H1 (cell line): ENCODE measurements at regions of chr3 and their contacts with region 1.

Region 1: DNA sequence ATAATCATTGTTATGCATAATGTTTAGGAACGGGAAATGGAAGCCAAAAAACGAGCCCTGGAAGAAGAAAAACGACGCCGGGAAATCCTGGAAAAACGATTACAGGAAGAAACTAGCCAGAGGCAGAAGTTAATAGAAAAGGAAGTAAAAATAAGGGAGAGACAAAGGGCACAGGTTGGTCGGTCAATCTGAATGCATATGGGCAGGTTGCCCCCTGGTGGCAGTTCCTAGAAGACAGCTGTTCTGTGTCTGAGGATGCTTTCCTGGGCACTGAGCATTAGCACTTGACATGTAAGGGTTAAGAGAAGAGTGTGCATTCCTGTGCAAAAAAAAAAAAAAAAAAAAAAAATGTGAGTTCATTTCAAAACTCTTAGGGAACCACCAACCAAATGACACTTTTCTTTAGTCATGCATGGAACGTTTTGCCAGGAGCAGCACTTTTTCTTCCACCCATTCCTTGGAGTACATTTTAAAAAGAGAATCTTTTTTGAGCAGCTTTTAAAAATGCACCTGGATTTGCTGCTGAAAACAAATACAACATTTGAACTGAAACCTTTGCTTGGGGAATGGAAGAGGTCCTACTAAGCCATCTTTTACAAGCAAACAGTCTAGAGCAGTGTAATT is 11.1 kb upstream of the ABHD10 start:
- DNase-seq: peak; percentile 58 to 93
- H3K4me3 ChIP-seq: no peak overlapping the region
- H3K27ac ChIP-seq: no peak overlapping the region
- H3K4me1 ChIP-seq: no peaks in the 10 kb centered on the region
- H3K27me3 ChIP-seq: no peaks in the 10 kb centered on the region
- CTCF ChIP-seq: peak; percentile 70 to 91 (median 88)
- EP300 ChIP-seq: no peak
- POLR2A ChIP-seq: no peak
- RAD21 ChIP-seq: peak; percentile 95 to 98

Region 2: DNA sequence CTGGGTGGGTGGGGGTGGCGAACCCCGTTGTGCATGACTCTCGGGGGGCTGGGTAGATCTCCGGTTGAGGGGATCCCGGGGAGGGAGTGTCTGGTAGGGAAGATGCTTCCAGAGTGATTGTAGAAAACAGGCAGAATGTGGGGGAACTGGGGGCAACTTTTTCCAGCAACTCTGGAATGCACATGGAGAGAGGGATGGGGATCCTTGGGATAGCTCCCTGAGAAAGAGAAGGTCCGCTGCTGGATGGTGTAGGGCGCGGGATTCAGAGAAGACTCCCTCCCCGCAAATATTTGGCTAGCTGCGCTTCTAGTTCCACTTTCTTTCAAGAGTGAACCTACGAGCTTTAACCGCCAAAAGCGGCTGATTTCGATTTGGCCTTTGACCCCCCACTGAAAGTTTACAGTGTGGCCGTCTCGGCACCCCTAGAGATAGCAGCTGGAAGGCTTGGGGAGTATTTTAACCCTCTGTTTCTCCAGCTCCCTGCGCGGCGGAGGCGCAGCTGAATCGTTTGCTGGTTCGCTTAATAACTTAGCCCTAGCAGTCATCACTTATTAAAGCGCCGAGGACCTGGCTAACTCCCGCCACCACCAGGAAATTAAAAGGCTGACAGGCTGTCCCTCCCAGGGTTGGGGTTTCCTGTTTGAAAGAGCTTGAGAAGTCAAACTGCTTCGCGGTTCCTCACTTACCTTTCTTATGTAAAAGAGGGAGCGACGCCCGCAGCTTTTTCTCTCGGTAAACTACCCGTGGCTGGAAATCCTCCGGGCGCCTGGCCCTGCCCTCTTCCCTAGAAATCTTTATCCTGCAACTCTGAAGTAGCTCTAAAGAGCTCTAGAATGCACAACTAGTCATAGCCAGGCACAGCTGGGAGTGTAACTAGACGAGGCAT is 107.5 kb before region 1 on chr3:
- CTCF ChIA-PET with region 1: interaction called, 18 read pairs
- POLR2A ChIA-PET with region 1: no interaction called
- DNase-seq: peak; percentile 72 to 75
- H3K4me3 ChIP-seq: peak overlapping the region; percentile 69 to 87 (median 76)
- H3K27ac ChIP-seq: no peak overlapping the region; the same call in 1 of the 2 replicates
- H3K4me1 ChIP-seq: peaks cover 3 to 16% (median 9%) of the 10 kb centered on the region in 4 experiments; a peak in 5 of 7 replicates
- H3K27me3 ChIP-seq: peaks cover 0 to 22% (median 14%) of the 10 kb centered on the region in 4 experiments; a peak in 5 of 7 replicates
- CTCF ChIP-seq: peak; percentile 14 to 28 (median 24)
- EP300 ChIP-seq: no peak
- POLR2A ChIP-seq: no peak
- RAD21 ChIP-seq: peak; percentile 35 to 49; a peak in 3 of 4 replicates

Region 3: DNA sequence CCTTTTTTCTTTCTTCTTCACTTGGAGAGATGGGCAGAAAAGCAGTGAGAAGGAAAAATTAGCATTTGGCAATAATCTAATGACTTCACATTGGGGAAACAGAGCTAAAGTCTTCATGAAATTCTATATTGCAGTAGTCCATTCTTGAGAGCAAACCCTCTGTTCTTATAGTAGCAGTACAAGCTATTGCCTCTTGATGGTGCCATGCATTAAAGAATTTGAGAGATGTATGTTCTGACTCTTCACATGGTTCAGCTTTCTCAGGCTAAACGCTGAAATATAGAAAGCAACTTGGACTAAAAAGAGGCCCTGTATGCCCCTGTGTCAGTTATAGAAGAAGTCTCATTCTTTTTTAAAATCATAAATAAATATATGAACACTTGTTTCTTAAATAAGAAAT is 72.7 kb before region 1 on chr3:
- CTCF ChIA-PET with region 1: interaction called, 64 read pairs
- POLR2A ChIA-PET with region 1: no interaction called
- DNase-seq: no peak
- H3K4me3 ChIP-seq: no peak overlapping the region
- H3K27ac ChIP-seq: no peak overlapping the region
- H3K4me1 ChIP-seq: no peaks in the 10 kb centered on the region
- H3K27me3 ChIP-seq: no peaks in the 10 kb centered on the region
- CTCF ChIP-seq: peak in 2 of 3 experiments; percentile 55; a peak in 2 of 4 replicates
- EP300 ChIP-seq: no peak
- POLR2A ChIP-seq: no peak
- RAD21 ChIP-seq: peak; percentile 76 to 80

Region 4: GRCh38 chr3:111910806-111911205 is 57.0 kb before region 1 on chr3:
- CTCF ChIA-PET with region 1: interaction called, 11 read pairs
- POLR2A ChIA-PET with region 1: no interaction called
- DNase-seq: no peak
- H3K4me3 ChIP-seq: no peak overlapping the region
- H3K27ac ChIP-seq: no peak overlapping the region
- H3K4me1 ChIP-seq: peaks cover 0 to 5% (median 2%) of the 10 kb centered on the region in 4 experiments; a peak in 3 of 7 replicates
- H3K27me3 ChIP-seq: no peaks in the 10 kb centered on the region
- CTCF ChIP-seq: no peak
- EP300 ChIP-seq: no peak
- POLR2A ChIP-seq: no peak
- RAD21 ChIP-seq: no peak

Region 5: GRCh38 chr3:111956995-111957734 is 10.6 kb before region 1 on chr3:
- CTCF ChIA-PET with region 1: interaction called, 45 read pairs
- POLR2A ChIA-PET with region 1: interaction called, 4 read pairs
- DNase-seq: peak in 1 of 2 experiments; percentile 10
- H3K4me3 ChIP-seq: peak overlapping the region in 1 of 4 experiments; percentile 33; a peak in 2 of 8 replicates
- H3K27ac ChIP-seq: no peak overlapping the region
- H3K4me1 ChIP-seq: peaks cover 0 to 15% (median 11%) of the 10 kb centered on the region in 4 experiments; a peak in 4 of 7 replicates
- H3K27me3 ChIP-seq: peaks cover 0 to 11% (median 10%) of the 10 kb centered on the region in 4 experiments; a peak in 5 of 7 replicates
- CTCF ChIP-seq: no peak
- EP300 ChIP-seq: no peak
- POLR2A ChIP-seq: no peak
- RAD21 ChIP-seq: no peak

Region 6: GRCh38 chr3:111978493-111979433 is 11.0 kb after region 1 on chr3 and contains the start of gene ABHD10:
- CTCF ChIA-PET with region 1: interaction called, 30 read pairs
- POLR2A ChIA-PET with region 1: interaction called, 12 read pairs
- DNase-seq: peak; percentile 93 to 95
- H3K4me3 ChIP-seq: peak within 1 kb of the TSS; percentile 80 to 91 (median 84)
- H3K27ac ChIP-seq: peak within 1 kb of the TSS; percentile 72
- H3K4me1 ChIP-seq: no peaks in the 10 kb centered on the region
- H3K27me3 ChIP-seq: no peaks in the 10 kb centered on the region
- CTCF ChIP-seq: no peak
- EP300 ChIP-seq: no peak
- POLR2A ChIP-seq: peak; percentile 86 to 93
- RAD21 ChIP-seq: no peak
- total RNA-seq, gene ABHD10: 24.6 and 27.5 TPM in 2 replicates

Region 7: DNA sequence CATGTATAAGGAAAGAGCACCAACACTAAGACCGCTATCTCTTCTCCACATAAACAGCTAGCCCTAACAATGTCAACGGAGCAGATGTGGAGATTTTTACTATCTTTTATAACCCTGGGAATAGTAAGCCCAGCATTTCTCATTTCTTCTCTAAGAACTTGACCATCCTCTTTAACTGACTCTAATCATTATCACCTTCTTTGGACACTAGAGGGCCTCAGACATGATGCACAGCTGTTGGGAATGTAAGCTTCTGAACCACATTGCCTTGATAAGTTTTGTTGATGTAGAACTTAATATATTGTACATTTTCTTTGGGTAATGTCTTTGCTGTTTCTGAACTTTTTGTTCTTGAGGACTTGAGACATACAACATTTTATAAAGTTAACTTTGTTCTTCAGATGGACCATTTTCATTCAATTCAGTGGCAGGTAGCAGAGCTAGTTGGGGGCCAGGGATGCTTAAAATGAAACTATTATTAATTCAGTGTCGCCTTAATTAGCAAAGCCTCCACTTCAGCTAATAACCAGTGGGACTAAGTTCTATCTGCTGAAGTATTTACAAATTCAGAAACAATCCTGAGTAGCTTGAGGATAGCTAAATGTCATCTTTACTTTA is 21.4 kb after region 1 on chr3:
- CTCF ChIA-PET with region 1: interaction called, 22 read pairs
- POLR2A ChIA-PET with region 1: interaction called, 3 read pairs
- DNase-seq: no peak
- H3K4me3 ChIP-seq: no peak overlapping the region
- H3K27ac ChIP-seq: no peak overlapping the region
- H3K4me1 ChIP-seq: no peaks in the 10 kb centered on the region
- H3K27me3 ChIP-seq: no peaks in the 10 kb centered on the region
- CTCF ChIP-seq: peak in 2 of 3 experiments; percentile 64 to 75; a peak in 3 of 4 replicates
- EP300 ChIP-seq: no peak
- POLR2A ChIP-seq: no peak
- RAD21 ChIP-seq: peak; percentile 61 to 64